HepG2 (cell line): ENCODE measurements at regions of chr5 and their contacts with region 1.

Region 1: DNA sequence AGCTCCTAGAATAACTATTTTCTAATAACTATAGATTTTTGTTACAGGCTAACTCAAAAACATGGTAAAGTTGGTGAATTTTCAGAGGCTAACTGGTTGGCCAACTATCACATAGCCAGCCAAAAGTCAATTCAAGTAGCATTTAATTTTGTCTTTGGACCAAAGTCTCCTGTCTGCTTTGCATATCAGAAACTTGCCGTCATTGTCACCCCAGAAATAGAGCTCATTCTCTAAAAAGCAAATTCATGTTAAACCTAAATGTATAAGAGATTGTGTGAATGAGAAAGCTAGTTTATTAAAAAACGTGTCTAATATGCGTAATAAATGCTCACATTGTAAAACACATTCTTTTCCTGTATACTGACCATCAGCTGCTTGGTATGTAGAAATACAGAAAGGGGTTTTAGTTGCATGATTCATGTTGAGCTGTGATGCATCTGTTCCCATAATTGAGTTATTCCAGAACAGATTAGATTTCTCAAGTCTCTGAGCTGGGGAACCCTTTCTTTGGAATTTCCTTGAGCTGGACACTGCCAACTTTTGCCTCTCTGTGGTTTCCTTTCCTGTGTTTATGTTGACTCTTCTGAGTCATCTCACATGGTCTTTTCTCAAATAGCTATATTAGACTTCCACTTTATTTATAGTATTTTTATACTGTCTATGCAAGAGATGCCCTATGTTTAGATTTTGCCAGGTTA is 7.3 kb downstream of the SRFBP1 start:
- DNase-seq: no peak
- ATAC-seq: no peak
- H3K4me3 ChIP-seq: no peak overlapping the region
- H3K27ac ChIP-seq: no peak overlapping the region
- H3K4me1 ChIP-seq: no peaks in the 10 kb centered on the region
- H3K27me3 ChIP-seq: no peaks in the 10 kb centered on the region
- CTCF ChIP-seq: no peak
- EP300 ChIP-seq: no peak
- POLR2A ChIP-seq: no peak
- RAD21 ChIP-seq: no peak

Region 2: DNA sequence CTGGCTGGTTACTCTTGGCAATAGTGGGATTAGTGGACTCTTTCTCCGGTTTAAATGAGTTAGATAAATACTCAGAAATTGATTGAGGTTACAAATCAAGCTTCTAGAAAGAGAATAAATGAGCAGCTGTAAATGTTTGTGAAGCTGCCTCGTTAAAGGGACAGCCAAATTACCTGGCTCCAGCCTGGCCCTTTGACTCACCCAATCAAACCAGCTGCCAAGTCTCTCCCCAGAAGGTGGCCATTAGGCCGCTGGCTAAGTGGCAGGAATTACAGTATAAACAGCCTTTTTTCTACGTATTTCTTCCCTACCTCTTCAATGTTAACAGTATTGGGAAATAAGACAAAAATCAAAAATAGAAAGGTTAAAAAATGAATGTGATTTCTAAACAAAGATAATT is 53.3 kb before region 1 on chr5:
- CTCF ChIA-PET with region 1: no interaction called
- POLR2A ChIA-PET with region 1: no interaction called
- in situ Hi-C with region 1: no loop called
- intact Hi-C with region 1: no loop called
- DNase-seq: no peak
- ATAC-seq: no peak
- H3K4me3 ChIP-seq: no peak overlapping the region
- H3K27ac ChIP-seq: no peak overlapping the region
- H3K4me1 ChIP-seq: no peaks in the 10 kb centered on the region
- H3K27me3 ChIP-seq: no peaks in the 10 kb centered on the region
- CTCF ChIP-seq: no peak
- EP300 ChIP-seq: no peak
- POLR2A ChIP-seq: no peak
- RAD21 ChIP-seq: no peak

Region 3: GRCh38 chr5:122156724-122157325 is 187.8 kb after region 1 on chr5:
- CTCF ChIA-PET with region 1: no interaction called
- POLR2A ChIA-PET with region 1: no interaction called
- in situ Hi-C with region 1: no loop called
- intact Hi-C with region 1: loop called (anchors 5 kb)
- DNase-seq: peak; percentile 11
- ATAC-seq: peak; percentile 44; the same call in 1 of the 3 replicates
- H3K4me3 ChIP-seq: no peak overlapping the region
- H3K27ac ChIP-seq: no peak overlapping the region
- H3K4me1 ChIP-seq: no peaks in the 10 kb centered on the region
- H3K27me3 ChIP-seq: no peaks in the 10 kb centered on the region; a peak in 1 of 5 replicates
- CTCF ChIP-seq: peak; percentile 35; the same call in 1 of the 2 replicates
- EP300 ChIP-seq: no peak
- POLR2A ChIP-seq: no peak
- RAD21 ChIP-seq: no peak